A673 (cell line): ENCODE measurements at regions of chr1 and their contacts with region 1.

Region 1: GRCh38 chr1:26645734-26646133 is 50.1 kb upstream of the ARID1A start:
- DNase-seq: no peak
- H3K4me3 ChIP-seq: no peak overlapping the region
- H3K27ac ChIP-seq: no peak overlapping the region
- H3K4me1 ChIP-seq: no peaks in the 10 kb centered on the region
- H3K27me3 ChIP-seq: no peaks in the 10 kb centered on the region
- CTCF ChIP-seq: no peak

Region 2: GRCh38 chr1:26541816-26542711 is 103.7 kb before region 1 on chr1:
- CTCF ChIA-PET with region 1: no interaction called
- POLR2A ChIA-PET with region 1: no interaction called
- intact Hi-C with region 1: no loop called
- DNase-seq: peak; percentile 48
- H3K4me3 ChIP-seq: no peak overlapping the region
- H3K27ac ChIP-seq: no peak overlapping the region
- H3K4me1 ChIP-seq: no peaks in the 10 kb centered on the region
- H3K27me3 ChIP-seq: no peaks in the 10 kb centered on the region
- CTCF ChIP-seq: 0 out of 2 replicates have a peak, but pooled peaks have one; percentile 26

Region 3: DNA sequence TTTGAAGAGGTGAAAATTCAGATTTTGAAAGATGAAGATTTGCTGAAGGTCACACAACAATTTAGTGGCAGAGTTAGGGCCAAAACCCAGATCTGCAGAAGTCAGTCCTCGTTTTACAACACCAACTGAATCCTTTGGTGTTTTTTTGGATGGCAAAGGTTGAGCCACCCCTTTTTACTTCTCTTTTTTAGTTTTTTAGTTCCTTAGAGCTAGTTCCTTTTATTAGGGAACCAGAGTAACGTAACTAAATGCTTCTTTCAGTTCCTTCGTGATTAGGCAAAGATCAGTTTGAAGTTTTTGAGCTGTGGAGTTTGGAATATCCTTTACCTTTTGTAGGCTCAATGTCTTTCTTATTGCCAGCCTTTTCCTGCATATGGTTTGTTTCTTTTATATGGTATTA is 17.8 kb before region 1 on chr1:
- CTCF ChIA-PET with region 1: interaction called, 7 read pairs
- POLR2A ChIA-PET with region 1: interaction called, 12 read pairs
- intact Hi-C with region 1: no loop called
- DNase-seq: no peak
- H3K4me3 ChIP-seq: no peak overlapping the region
- H3K27ac ChIP-seq: no peak overlapping the region
- H3K4me1 ChIP-seq: no peaks in the 10 kb centered on the region
- H3K27me3 ChIP-seq: no peaks in the 10 kb centered on the region
- CTCF ChIP-seq: no peak

Region 4: GRCh38 chr1:26744075-26744959 is 98.6 kb after region 1 on chr1:
- CTCF ChIA-PET with region 1: no interaction called
- POLR2A ChIA-PET with region 1: no interaction called
- intact Hi-C with region 1: no loop called
- DNase-seq: peak; percentile 77
- H3K4me3 ChIP-seq: no peak overlapping the region
- H3K27ac ChIP-seq: peak overlapping the region; percentile 7
- H3K4me1 ChIP-seq: peaks cover 7% of the 10 kb centered on the region
- H3K27me3 ChIP-seq: no peaks in the 10 kb centered on the region
- CTCF ChIP-seq: no peak

Region 5: GRCh38 chr1:26864610-26865527 is 219.1 kb after region 1 on chr1:
- CTCF ChIA-PET with region 1: no interaction called
- POLR2A ChIA-PET with region 1: no interaction called
- intact Hi-C with region 1: no loop called
- DNase-seq: peak; percentile 99
- H3K4me3 ChIP-seq: peak overlapping the region; percentile 61
- H3K27ac ChIP-seq: peak overlapping the region; percentile 79
- H3K4me1 ChIP-seq: no peaks in the 10 kb centered on the region
- H3K27me3 ChIP-seq: no peaks in the 10 kb centered on the region
- CTCF ChIP-seq: 0 out of 2 replicates have a peak, but pooled peaks have one; percentile 22